Left cardiac atrium (tissue), 4 donors: ENCODE measurements at regions of chr1 and their contacts with region 1.

Region 1: DNA sequence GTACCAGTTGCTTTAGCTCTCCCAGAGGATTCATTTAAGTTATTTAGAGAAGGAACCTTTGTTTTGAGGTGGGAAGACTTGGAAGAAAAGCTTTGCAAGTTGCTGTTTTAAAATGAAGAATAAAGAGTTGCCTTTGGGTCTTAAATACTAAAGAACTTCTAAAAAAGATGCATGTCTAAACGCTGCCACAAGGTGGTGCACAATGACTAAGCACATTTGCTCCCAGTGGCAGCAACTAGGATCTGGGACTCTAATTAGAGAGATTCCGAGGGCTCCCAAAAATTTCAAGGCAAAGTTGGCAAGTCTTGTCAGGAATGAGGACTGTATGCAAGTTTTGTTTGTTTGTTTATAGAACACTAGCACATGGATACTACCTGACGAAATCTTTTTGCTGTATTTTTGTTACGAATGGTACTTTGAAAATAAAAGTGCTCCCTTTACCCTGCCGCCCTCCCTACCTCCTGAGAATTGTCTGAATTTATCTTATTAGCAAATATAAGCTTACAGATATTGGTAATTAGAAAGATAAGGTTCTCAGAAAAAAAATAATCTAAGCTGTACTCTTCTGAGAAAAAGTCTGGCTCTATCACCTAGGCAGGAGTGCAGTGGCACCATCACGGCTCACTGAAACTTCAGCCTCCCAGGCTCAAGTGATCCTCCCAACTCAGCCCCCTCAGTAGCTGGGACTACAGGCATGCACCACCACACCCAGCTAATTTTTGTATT is 121.8 kb downstream of the HFM1 start:
- DNase-seq: peak; percentile 42
- ATAC-seq: peak; percentile 72 to 76

Region 2: DNA sequence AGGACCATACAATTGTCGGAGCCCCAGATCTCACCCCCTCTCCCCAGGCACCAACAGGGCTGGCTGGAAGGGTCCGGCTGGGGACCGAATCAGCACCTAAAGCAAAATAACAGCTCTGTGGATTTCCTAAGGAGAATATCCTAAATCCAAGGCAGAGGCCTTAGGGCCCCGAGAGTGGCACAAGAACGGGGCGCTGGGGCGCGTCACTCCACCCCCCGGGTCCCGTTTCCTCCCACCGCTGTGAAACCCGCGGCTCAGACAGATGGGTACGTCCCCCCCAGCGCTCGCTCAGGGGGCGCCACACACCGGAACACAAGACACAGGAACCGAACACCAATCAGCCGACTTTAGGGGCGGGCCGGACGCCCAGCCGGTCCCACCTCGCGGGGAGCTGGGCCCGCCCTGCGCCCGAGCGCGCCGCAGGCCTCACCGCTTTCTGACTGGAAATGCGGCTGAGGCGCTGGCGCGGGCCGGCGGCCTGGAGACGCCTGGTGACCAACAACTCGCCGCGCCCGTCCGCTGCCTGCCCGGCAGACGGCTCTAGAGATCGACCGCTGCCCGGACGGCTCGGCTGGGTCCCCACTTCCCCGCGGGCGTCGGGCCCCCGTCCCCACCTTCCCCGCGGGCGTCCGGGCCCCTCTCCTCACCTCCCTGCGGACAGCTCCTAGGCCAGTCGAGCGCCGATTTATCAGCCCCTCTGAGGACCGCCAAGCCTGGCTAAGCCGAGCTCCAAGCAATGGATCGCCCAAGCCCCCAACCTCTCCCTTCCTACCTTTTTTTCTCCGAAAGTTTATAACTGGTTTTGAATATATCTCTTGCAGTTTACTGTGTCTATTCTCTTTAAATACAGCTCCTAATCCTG is 121.5 kb after region 1 on chr1 and contains the start of gene HFM1:
- intact Hi-C with region 1: loop called in 1 of 2 experiments (anchors 2 kb)
- DNase-seq: peak; percentile 90
- ATAC-seq: peak; percentile 98 to 100
- total RNA-seq, gene HFM1: 1.6 to 3.5 TPM

Region 3: GRCh38 chr1:91476533-91477217 is 193.8 kb after region 1 on chr1:
- intact Hi-C with region 1: no loop called
- DNase-seq: no peak
- ATAC-seq: peak in 1 of 2 donors; percentile 63

Region 4: GRCh38 chr1:91500756-91501522 is 218.1 kb after region 1 on chr1 and contains the start of gene CDC7:
- intact Hi-C with region 1: loop called in 1 of 2 experiments (anchors 5 kb)
- DNase-seq: peak; percentile 95
- ATAC-seq: peak; percentile 97
- total RNA-seq, gene CDC7: 1.3 to 3.2 TPM

Region 5: GRCh38 chr1:91929250-91929649 is 646.4 kb after region 1 on chr1:
- intact Hi-C with region 1: loop called (anchors 5 to 10 kb)
- DNase-seq: no peak
- ATAC-seq: peak in 1 of 2 donors; percentile 61

Region 6: GRCh38 chr1:91937613-91938012 is 654.8 kb after region 1 on chr1:
- intact Hi-C with region 1: loop called in 1 of 2 experiments (anchors 10 kb)
- DNase-seq: no peak
- ATAC-seq: no peak

Region 7: DNA sequence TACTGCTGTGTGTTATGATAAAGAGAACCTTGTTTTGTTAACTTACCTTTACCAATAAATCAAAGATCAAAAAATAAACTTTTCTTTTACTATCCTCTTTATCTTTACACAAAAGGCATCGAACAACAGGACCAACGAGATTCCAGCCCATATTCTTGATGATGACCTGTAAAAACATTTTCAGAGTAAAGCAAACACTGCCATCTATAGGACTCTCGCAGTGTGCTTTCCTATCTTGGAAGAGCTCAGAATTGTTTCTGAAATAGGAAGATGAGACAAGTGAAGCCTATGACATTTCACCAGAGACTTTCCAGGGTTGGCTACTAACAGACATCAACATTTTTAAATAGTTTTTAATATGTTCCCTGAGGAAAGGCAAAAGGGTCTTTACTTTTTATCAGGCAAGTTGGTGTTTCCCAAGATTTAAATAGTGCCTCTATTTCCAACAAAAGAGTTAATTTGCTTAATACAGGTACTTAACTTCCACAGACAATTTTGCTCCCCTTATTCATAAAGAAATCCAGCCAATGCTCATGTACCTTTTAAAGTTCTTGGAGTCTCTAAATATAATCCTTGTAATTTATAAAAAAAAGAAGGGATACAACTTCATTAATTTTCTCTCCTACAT is 1008.6 kb after region 1 on chr1:
- intact Hi-C with region 1: loop called in 1 of 2 experiments (anchors 5 kb)
- DNase-seq: no peak
- ATAC-seq: peak; percentile 43 to 59